Sciatic nerve (tissue), 2 donors: ENCODE measurements at regions of chr3 and their contacts with region 1.

Region 1: DNA sequence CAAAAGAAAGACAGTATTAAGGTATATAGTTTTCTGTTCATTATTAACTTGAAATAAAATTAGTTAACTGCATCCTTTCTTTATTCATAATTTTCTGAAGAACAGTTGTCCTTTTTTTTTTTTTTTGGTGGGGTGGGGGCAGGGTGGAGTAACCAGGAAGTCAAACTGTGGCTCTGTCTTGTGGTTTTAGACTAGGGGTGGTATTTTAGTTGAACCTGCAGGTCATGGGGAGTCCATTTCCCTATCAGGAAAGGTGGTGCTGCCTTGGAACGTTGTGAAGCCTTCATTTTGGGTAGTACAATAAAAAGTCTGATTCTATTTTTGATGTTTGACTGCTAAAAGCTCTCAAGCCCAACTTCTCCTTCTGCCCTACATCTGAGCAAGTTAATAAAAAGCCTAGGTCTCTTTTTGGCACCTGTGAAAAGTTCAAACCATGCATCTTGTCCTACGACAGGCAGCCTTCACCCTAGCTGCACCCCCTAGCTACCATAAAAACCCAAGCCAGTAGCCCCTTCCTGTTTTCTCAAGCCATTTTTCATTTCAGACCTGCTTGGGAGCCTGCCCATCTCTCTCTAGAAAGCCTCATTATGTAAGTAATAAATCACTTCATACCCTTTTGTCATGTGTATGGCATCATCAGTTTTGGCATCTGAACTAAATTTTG is 31.2 kb upstream of the RIOX2 start:
- DNase-seq: no peak
- ATAC-seq: no peak

Region 2: GRCh38 chr3:97967966-97968365 is 35.5 kb before region 1 on chr3:
- intact Hi-C with region 1: loop called (anchors 1 kb)
- DNase-seq: no peak
- ATAC-seq: no peak

Region 3: DNA sequence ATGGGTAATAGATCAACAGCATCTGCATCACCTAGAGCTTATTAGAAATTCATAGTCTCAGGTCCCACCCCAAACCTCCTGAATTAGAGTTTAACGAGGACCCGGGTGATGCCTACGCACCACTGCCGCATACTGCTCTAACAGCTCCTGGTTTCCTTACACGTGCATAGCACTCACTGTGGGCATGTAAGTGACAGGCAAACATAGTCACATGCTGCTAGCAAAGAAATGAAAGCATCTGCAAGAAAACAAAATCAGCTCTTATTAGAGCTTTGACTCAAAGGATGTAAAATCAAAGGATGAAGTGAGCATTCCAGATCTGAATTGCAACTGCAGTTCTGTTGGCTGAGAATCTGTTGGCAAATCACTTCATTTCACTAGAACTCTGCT is 12.2 kb before region 1 on chr3:
- intact Hi-C with region 1: no loop called
- DNase-seq: no peak
- ATAC-seq: no peak

Region 4: DNA sequence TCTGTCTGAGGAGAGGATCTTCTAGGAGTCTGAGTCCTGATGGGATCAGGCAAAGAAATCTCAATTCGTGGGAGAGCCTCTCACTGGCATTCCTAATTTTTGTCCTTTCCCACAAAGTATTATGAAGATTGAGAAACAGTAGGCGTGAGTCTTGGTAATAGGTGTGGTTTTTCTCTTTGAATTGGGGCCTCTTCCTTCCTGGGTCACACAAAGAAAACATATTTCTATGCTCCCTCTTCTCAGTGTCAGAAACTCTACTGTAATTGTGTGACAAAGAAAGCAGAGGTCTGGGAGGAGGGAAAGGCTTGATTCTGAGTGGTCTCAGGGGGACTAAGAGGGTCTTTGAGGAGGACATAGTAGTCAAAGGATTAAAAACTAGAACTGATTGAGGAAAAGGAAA is 25.6 kb after region 1 on chr3:
- intact Hi-C with region 1: no loop called
- DNase-seq: no peak
- ATAC-seq: no peak

Region 5: DNA sequence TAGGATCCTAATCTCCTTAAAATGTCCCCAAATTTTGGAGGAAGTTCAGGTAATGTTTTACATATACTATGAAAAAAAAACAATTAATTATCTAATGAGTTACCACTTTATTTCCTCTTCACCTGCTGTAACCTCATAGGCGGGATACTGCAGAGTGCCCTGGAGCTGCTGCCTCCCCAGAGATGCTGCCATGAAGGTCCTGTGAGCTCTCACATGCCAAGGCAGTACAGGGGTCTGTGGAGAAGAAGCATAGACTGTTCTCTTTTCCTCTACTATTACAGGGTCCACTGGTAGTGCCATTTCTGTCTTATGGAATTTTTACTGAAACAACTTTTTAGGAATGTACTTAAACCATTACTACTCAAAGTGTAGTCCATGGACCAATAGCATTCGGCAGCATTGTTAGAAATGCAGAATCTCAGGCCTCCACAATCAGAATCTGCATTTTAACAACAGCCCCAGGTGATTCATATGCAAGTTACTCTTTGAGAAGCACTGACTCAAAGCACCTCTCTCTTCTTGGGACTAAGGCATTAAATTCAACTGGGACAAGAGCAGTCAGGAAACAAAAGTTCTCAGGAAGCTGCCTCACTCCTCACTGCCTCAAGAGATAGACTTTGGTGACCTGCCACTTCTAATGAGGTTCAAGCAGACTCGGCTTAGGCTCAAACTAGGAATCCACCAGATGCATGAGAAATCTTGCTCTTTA is 620.3 kb after region 1 on chr3:
- intact Hi-C with region 1: no loop called
- DNase-seq: no peak
- ATAC-seq: no peak